ENCODE measurements at regions of chr19 and their contacts with region 1.

Region 1: GRCh38 chr19:15379083-15379995 is at the start of gene AKAP8:
- DNase-seq: peak; percentile 99
- H3K4me3 Mint-ChIP-seq: peak within 1 kb of the TSS; percentile 86
- H3K27ac Mint-ChIP-seq: peak within 1 kb of the TSS; percentile 100
- H3K4me1 Mint-ChIP-seq: peaks cover 33% of the 10 kb centered on the region
- H3K27me3 Mint-ChIP-seq: peaks cover 2% of the 10 kb centered on the region
- total RNA-seq, gene AKAP8: 55.4 and 56.2 TPM in 2 replicates

Region 2: GRCh38 chr19:15125232-15126067 is 253.9 kb before region 1 on chr19:
- intact Hi-C with region 1: loop called (anchors 1 kb)
- DNase-seq: peak; percentile 99
- H3K4me3 Mint-ChIP-seq: peak overlapping the region; percentile 92
- H3K27ac Mint-ChIP-seq: peak overlapping the region; percentile 96
- H3K4me1 Mint-ChIP-seq: peaks cover 32% of the 10 kb centered on the region
- H3K27me3 Mint-ChIP-seq: no peaks in the 10 kb centered on the region

Region 3: GRCh38 chr19:15292847-15293582 is 86.3 kb before region 1 on chr19:
- intact Hi-C with region 1: loop called (anchors 5 kb)
- DNase-seq: peak; percentile 69
- H3K4me3 Mint-ChIP-seq: peak overlapping the region; percentile 73
- H3K27ac Mint-ChIP-seq: peak overlapping the region; percentile 89
- H3K4me1 Mint-ChIP-seq: peaks cover 85% of the 10 kb centered on the region
- H3K27me3 Mint-ChIP-seq: no peaks in the 10 kb centered on the region

Region 4: GRCh38 chr19:15418588-15419412 is 39.5 kb after region 1 on chr19 and contains the start of gene AKAP8L:
- intact Hi-C with region 1: loop called (anchors 1 kb)
- DNase-seq: peak; percentile 100
- H3K4me3 Mint-ChIP-seq: peak within 1 kb of the TSS; percentile 100
- H3K27ac Mint-ChIP-seq: peak within 1 kb of the TSS; percentile 100
- H3K4me1 Mint-ChIP-seq: peaks cover 33% of the 10 kb centered on the region
- H3K27me3 Mint-ChIP-seq: no peaks in the 10 kb centered on the region
- total RNA-seq, gene AKAP8L: 76.8 and 80.1 TPM in 2 replicates

Region 5: DNA sequence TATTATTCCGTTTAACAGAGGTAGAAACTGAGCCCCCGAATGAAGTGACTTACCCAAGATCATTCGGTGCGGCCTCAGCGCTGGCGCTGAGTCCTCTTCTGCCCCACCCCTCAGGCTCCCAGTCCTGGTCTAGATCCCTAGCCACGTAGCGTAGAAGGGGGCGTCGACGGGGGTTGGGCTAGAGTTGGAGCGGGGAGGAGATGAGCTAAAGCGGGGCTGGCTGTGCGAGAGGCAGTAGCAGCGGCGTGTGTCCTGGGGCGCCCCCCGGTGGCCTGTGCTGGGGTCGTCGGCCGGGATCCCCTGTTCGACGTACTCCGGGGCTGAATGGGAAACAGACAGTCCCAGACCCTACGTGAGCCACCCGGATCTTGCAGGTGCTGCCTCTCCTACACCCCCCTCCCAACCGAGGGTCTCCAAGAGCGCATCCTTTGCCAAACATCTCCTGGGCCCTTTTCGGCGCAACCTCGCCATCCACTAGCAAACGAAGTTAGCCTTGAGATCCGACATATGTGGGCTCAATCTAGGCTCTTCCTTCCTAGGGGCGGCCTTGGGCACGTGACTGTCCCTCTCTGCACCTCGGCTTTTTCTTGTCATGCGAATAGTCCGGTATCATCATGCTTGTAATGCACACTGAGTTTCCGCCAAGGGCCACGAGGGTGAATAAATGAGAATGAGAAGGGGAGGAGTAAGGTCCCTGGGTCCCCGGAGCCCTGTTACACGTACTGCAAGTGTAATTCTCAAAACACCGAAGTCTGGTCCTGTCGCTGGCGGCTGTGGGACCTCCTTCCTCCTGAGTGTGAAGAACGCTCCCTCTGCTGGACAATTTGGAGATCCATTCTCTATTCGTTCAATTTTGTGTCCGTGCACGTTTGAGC is 176.7 kb after region 1 on chr19:
- intact Hi-C with region 1: loop called (anchors 1 kb)
- DNase-seq: peak; percentile 99
- H3K4me3 Mint-ChIP-seq: peak overlapping the region; percentile 85
- H3K27ac Mint-ChIP-seq: peak overlapping the region; percentile 88
- H3K4me1 Mint-ChIP-seq: peaks cover 21% of the 10 kb centered on the region
- H3K27me3 Mint-ChIP-seq: peaks cover 9% of the 10 kb centered on the region

Measured in activated CD4-positive, alpha-beta T cell treated with anti-CD3 and anti-CD28 coated beads, Interleukin-2, amount 10 ng/mL, durations not matched to agents 24 days and 14 days (primary cell).